ENCODE measurements at regions of chr12 and their contacts with region 1.

Region 1: DNA sequence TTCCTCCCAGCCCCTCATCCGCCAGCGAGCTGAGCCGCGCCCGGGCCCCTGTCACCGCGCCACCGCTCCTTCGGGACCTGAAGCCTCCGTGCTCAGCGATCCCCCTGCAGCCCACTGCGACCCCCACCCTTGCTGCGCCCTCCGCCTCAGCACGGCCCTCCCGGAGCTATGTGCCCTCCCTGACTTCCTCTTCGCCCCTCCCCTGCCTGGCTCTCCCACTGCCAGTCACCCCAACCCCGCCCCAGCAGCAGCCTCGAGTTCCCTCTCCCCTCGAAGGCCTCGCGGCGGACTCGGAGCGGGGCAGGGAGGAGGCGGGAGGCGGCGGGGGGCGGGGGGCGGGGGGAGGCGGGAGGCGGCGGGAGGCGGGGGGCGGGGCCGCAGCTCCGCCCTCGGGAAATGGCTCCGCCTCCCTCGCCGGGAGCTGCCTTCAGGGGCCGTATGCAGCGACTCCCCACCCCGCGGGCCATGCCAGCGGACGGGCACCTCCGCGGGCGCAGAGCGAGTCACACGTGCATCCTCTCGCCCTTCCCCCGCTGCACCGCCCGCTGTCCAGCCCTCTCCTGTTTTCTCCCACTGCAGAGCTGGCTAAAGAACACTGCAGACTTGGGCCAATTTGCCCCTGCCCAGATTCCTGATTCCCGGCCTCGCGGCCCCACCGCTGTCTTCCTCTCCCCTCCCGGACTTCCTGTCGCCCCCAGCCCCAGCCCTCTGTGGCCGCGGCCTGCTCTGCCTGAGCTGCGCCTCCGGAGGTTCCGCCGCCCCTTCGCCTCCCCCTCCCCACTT is 29.1 kb upstream of the ADIPOR2 start:
- DNase-seq: peak; percentile 99

Region 2: DNA sequence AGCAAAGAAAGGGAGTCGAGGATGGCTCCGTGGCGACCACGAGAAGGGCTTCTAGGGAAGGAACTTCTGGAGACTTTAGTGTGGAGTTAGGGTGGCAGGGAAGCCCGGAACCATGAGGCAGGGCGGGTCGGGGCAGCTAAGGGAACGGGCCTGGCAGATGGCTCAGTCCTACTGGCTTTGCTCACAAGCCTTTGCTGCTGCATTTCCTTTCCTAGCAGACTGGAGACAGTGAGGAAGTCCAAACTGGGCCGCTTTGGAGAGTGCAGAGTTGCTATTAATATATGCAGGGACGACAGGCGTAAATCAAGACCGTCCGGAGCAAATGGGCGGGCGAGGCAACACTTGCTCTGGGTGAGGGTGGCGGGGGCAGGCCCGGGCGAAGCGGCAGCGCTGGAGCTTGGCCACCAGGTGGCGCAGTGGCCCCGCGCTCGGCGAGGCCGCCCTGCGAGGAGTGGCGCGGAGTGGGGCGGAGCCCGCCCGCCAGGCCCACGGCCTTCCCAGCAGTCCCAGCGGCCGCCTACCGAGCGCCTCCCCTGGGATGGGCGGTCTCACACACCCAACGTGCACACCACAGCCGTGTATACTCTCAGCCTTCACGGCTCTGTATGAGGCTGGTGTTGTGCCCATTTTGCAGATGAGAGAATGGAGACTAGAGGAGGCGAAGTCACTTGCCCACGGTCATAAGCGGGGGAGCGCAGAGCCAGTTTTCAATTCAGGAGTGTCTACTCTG is 134.2 kb after region 1 on chr12:
- in situ Hi-C with region 1: loop called (anchors 25 kb)
- DNase-seq: peak; percentile 95

Measured in ACHN (cell line).